CD4-positive, alpha-beta memory T cell (primary cell): ENCODE measurements at regions of chr1 and their contacts with region 1.

Region 1: DNA sequence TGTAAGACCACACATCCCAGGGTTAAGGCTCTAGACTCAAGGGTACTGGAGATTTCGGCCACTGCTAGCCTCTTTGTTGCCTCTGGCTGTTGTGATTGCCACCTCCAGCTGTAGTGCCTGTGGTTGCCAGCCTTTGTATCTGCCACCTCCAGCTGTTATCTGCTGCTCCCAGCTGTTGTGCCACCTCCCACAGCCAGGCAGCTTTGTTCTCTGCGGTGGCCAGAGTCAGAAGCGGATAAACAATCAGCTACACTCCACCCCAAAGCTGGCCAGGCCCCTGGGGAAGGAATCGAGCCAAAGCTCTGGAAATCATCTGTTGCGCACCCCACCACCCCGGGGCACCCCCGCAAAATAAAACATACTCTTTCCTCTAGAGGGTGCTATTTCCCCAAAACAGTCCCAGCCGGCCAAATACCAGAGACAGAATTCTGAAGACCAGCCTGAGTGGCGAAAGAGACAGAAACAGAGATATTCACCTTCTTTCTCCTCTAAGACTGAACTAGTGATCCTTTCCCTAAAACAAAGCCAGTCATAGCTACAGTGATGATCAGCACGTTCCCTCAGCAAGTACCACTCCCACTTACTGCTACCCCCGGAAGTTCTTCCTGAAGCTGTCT is 14.8 kb upstream of the PIGM start:
- DNase-seq: peak; percentile 27 to 48 (median 47)
- H3K4me3 ChIP-seq: no peak overlapping the region
- H3K4me3 Mint-ChIP-seq: peak overlapping the region; percentile 57 to 79 (median 70)
- H3K27ac ChIP-seq: no peak overlapping the region
- H3K27ac Mint-ChIP-seq: peak overlapping the region in 3 of 7 donors; percentile 31 to 62 (median 62)
- H3K4me1 ChIP-seq: peaks cover 10% of the 10 kb centered on the region
- H3K4me1 Mint-ChIP-seq: peaks cover 6 to 12% (median 9%) of the 10 kb centered on the region in 4 donors
- H3K27me3 ChIP-seq: no peaks in the 10 kb centered on the region
- H3K27me3 Mint-ChIP-seq: peaks cover 12 to 18% of the 10 kb centered on the region in 2 donors

Region 2: GRCh38 chr1:160031365-160032164 is 15.0 kb before region 1 on chr1 and contains the start of gene PIGM:
- CTCF ChIA-PET with region 1: interaction called, 35 read pairs
- POLR2A ChIA-PET with region 1: interaction called, 8 read pairs
- intact Hi-C with region 1: no loop called
- DNase-seq: peak; percentile 89 to 96 (median 91)
- H3K4me3 ChIP-seq: peak within 1 kb of the TSS; percentile 71 to 79
- H3K4me3 Mint-ChIP-seq: peak within 1 kb of the TSS; percentile 94 to 99 (median 98)
- H3K27ac ChIP-seq: peak within 1 kb of the TSS; percentile 57
- H3K27ac Mint-ChIP-seq: peak within 1 kb of the TSS; percentile 89 to 98 (median 97)
- H3K4me1 ChIP-seq: peaks cover 32% of the 10 kb centered on the region
- H3K4me1 Mint-ChIP-seq: peaks cover 27 to 42% (median 33%) of the 10 kb centered on the region in 4 donors
- H3K27me3 ChIP-seq: no peaks in the 10 kb centered on the region
- H3K27me3 Mint-ChIP-seq: no peaks in the 10 kb centered on the region
- total RNA-seq, gene PIGM: 11.7 to 12.3 TPM

Region 3: GRCh38 chr1:160058087-160058486 is 11.5 kb after region 1 on chr1:
- CTCF ChIA-PET with region 1: interaction called, 12 read pairs
- POLR2A ChIA-PET with region 1: interaction called, 3 read pairs
- intact Hi-C with region 1: no loop called
- DNase-seq: no peak
- H3K4me3 ChIP-seq: no peak overlapping the region
- H3K4me3 Mint-ChIP-seq: no peak overlapping the region
- H3K27ac ChIP-seq: no peak overlapping the region
- H3K27ac Mint-ChIP-seq: no peak overlapping the region
- H3K4me1 ChIP-seq: no peaks in the 10 kb centered on the region
- H3K4me1 Mint-ChIP-seq: no peaks in the 10 kb centered on the region
- H3K27me3 ChIP-seq: peaks cover 6% of the 10 kb centered on the region
- H3K27me3 Mint-ChIP-seq: peaks cover 22 to 34% of the 10 kb centered on the region in 2 donors

Region 4: GRCh38 chr1:160070243-160071163 is 23.9 kb after region 1 on chr1:
- CTCF ChIA-PET with region 1: interaction called, 13 read pairs
- POLR2A ChIA-PET with region 1: no interaction called
- intact Hi-C with region 1: no loop called
- DNase-seq: peak; percentile 47 to 68 (median 51)
- H3K4me3 ChIP-seq: peak overlapping the region in 1 of 2 donors; percentile 60
- H3K4me3 Mint-ChIP-seq: peak overlapping the region; percentile 85 to 97 (median 92)
- H3K27ac ChIP-seq: no peak overlapping the region
- H3K27ac Mint-ChIP-seq: peak overlapping the region in 5 of 7 donors; percentile 53 to 86 (median 60)
- H3K4me1 ChIP-seq: peaks cover 15% of the 10 kb centered on the region
- H3K4me1 Mint-ChIP-seq: peaks cover 6 to 12% (median 9%) of the 10 kb centered on the region in 4 donors
- H3K27me3 ChIP-seq: peaks cover 20% of the 10 kb centered on the region
- H3K27me3 Mint-ChIP-seq: peaks cover 26 to 51% of the 10 kb centered on the region in 2 donors